Activated CD8-positive, alpha-beta T cell treated with anti-CD3 and anti-CD28 coated beads, Interleukin-2, amount 10 ng/mL, durations not matched to agents 7 days and 5 days (primary cell): ENCODE measurements at regions of chr17 and their contacts with region 1.

Region 1: GRCh38 chr17:7435221-7435675 is at the start of gene TMEM102:
- DNase-seq: peak; percentile 99
- ATAC-seq: peak; percentile 73
- H3K4me3 Mint-ChIP-seq: peak within 1 kb of the TSS; percentile 95
- H3K27ac Mint-ChIP-seq: peak within 1 kb of the TSS; percentile 98
- H3K4me1 Mint-ChIP-seq: peaks cover 38% of the 10 kb centered on the region
- H3K27me3 Mint-ChIP-seq: peaks cover 10% of the 10 kb centered on the region
- total RNA-seq, gene TMEM102: 16.5 to 18.1 TPM

Region 2: GRCh38 chr17:7045909-7046724 is 389.1 kb before region 1 on chr17:
- CTCF ChIA-PET with region 1: interaction called, 11 read pairs
- POLR2A ChIA-PET with region 1: no interaction called
- DNase-seq: peak; percentile 68
- ATAC-seq: peak; percentile 43
- H3K4me3 Mint-ChIP-seq: peak overlapping the region; percentile 73
- H3K27ac Mint-ChIP-seq: peak overlapping the region; percentile 66
- H3K4me1 Mint-ChIP-seq: peaks cover 37% of the 10 kb centered on the region
- H3K27me3 Mint-ChIP-seq: peaks cover 10% of the 10 kb centered on the region

Region 3: DNA sequence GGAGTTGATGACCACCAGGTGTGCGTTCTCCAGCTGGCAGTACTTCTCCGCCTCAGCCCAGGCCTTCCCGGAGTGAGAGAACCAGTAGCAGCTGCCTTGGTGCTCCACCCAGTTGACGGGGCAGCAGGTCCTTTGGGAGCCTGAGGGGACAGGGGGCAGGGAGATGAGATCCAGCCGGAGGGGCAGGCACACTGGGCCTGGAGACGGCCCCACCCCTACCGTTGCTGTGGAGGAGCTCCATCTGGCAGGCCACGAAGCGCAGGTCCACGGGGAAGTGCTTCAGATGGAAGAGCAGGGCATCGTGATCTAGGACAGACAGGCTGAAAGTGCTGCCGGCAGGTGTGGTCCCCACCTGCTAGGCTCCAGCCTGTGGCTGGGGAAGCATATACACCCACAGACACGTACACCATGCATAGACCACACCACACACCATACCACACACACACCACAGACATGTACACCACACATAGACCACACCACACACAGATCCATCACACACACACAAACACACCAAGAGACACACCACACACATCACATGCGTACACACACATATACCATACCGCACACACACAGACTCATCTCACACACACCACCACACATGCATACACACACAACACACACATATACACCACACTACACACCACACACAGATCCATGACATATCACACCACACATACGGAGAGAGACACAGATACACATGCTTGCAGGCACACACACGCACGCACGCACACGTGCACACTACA is 328.1 kb before region 1 on chr17:
- CTCF ChIA-PET with region 1: no interaction called
- POLR2A ChIA-PET with region 1: no interaction called
- DNase-seq: no peak
- ATAC-seq: no peak
- H3K4me3 Mint-ChIP-seq: no peak overlapping the region
- H3K27ac Mint-ChIP-seq: no peak overlapping the region
- H3K4me1 Mint-ChIP-seq: peaks cover 8% of the 10 kb centered on the region
- H3K27me3 Mint-ChIP-seq: no peaks in the 10 kb centered on the region

Region 4: DNA sequence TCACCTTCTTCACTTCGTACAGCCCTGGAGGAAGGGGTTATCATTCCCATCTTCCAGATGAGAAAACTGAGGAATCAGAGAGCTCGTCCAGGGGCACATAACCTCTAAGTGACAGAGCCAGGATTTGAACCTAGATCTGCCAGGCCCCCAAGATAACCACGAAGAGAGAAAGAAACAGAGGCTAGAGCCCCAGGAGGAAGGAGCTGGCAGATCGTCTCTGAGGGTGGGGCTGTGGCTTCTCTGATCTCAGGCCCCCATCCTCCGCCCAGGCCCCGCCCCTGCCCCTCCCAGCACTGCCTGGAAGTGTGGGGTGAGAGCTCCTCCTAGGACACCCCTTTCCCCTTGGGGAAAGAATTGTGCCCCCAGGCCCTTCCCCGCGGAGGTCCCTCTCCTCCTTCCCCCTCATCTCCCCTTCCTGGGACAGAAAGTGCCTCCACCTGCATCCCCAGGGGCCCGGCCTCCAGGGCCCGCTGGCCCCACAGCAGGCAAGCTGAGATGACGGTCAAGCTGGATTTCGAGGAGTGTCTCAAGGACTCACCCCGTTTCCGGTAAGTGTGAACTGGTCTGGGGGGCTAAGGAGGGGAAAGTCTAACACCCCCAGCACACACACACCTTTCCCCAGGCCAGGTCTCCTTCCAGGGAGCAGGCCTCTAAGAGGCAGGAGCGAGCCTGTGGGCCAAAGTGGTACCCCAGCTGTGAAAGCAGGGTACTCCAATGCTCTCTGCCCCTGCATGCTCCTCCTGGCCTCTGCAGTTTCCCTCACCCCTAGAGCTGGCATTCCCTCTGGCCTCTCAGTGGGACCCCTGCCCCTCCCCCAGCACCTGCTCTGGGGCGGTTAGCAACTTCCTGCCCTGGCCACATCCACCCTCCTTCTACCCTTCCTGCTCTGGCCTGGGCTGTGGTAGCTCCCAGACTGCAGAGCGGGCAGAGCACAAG is 98.7 kb before region 1 on chr17 and contains the start of gene ACAP1:
- CTCF ChIA-PET with region 1: interaction called, 14 read pairs
- POLR2A ChIA-PET with region 1: interaction called, 12 read pairs
- DNase-seq: peak; percentile 95
- ATAC-seq: peak; percentile 95
- H3K4me3 Mint-ChIP-seq: peak within 1 kb of the TSS; percentile 85
- H3K27ac Mint-ChIP-seq: peak within 1 kb of the TSS; percentile 98
- H3K4me1 Mint-ChIP-seq: peaks cover 59% of the 10 kb centered on the region
- H3K27me3 Mint-ChIP-seq: no peaks in the 10 kb centered on the region
- total RNA-seq, gene ACAP1: 573 to 605 TPM

Region 5: GRCh38 chr17:7403977-7404736 is 31.1 kb before region 1 on chr17 and contains the start of gene TMEM256:
- CTCF ChIA-PET with region 1: interaction called, 22 read pairs
- POLR2A ChIA-PET with region 1: interaction called, 4 read pairs
- DNase-seq: peak; percentile 99
- ATAC-seq: peak; percentile 94
- H3K4me3 Mint-ChIP-seq: peak within 1 kb of the TSS; percentile 95
- H3K27ac Mint-ChIP-seq: peak within 1 kb of the TSS; percentile 94
- H3K4me1 Mint-ChIP-seq: peaks cover 18% of the 10 kb centered on the region
- H3K27me3 Mint-ChIP-seq: peaks cover 9% of the 10 kb centered on the region
- total RNA-seq, gene TMEM256: 61.8 to 62.3 TPM

Region 6: DNA sequence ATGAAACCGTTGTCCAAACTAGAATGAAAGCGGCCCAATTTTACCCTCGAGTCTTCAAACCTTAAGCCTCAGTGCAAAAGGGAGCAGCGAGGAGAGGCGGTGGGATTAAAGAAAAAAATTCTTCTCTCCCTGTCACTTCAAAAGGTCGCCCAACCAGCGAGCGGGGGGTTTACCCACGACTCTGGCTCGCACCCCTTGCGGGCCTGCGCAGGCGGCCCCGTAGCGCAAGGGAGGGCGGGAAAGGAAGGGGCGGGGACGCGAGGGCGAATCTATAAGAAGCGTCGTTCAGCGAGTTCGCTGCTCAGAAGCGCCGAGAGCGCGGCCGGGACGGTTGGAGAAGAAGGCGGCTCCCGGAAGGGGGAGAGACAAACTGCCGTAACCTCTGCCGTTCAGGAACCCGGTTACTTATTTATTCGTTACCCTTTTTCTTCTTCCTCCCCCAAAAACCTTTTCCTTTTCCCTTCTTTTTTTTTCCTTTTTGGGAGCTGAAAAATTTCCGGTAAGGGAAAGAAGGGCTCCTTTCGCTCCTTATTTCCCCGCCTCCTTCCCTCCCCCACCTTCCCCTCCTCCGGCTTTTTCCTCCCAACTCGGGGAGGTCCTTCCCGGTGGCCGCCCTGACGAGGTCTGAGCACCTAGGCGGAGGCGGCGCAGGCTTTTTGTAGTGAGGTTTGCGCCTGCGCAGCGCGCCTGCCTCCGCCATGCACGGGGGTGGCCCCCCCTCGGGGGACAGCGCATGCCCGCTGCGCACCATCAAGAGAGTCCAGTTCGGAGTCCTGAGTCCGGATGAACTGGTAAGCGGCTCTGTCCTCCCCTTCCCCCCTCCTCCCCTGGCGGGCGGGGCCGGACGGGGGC is 49.0 kb after region 1 on chr17 and contains the start of gene POLR2A:
- CTCF ChIA-PET with region 1: interaction called, 78 read pairs
- POLR2A ChIA-PET with region 1: interaction called, 41 read pairs
- DNase-seq: peak; percentile 97
- ATAC-seq: peak; percentile 64
- H3K4me3 Mint-ChIP-seq: peak within 1 kb of the TSS; percentile 94
- H3K27ac Mint-ChIP-seq: peak within 1 kb of the TSS; percentile 99
- H3K4me1 Mint-ChIP-seq: peaks cover 63% of the 10 kb centered on the region
- H3K27me3 Mint-ChIP-seq: no peaks in the 10 kb centered on the region
- total RNA-seq, gene POLR2A: 183 to 185 TPM

Region 7: DNA sequence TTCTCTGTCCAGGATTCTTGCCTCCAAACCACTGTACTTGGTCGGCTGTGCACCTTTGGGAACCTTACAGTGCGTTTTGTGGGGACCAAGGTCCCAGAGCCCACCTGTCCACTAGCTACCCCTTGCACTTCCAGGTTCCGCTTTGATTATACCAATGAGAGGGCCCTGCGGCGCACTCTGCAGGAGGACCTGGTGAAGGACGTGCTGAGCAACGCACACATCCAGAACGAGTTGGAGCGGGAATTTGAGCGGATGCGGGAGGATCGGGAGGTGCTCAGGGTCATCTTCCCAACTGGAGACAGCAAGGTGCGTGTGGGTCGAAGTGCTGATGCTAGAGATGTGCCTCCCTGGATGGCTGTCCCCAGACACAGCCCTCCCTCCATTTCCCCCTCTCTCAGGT is 67.7 kb after region 1 on chr17:
- CTCF ChIA-PET with region 1: interaction called, 10 read pairs
- POLR2A ChIA-PET with region 1: no interaction called
- DNase-seq: no peak
- ATAC-seq: no peak
- H3K4me3 Mint-ChIP-seq: no peak overlapping the region
- H3K27ac Mint-ChIP-seq: no peak overlapping the region
- H3K4me1 Mint-ChIP-seq: no peaks in the 10 kb centered on the region
- H3K27me3 Mint-ChIP-seq: no peaks in the 10 kb centered on the region

Region 8: GRCh38 chr17:7572588-7573323 is 137.5 kb after region 1 on chr17:
- CTCF ChIA-PET with region 1: interaction called, 10 read pairs
- POLR2A ChIA-PET with region 1: interaction called, 4 read pairs
- DNase-seq: no peak
- ATAC-seq: peak; percentile 13
- H3K4me3 Mint-ChIP-seq: peak overlapping the region; percentile 93
- H3K27ac Mint-ChIP-seq: peak overlapping the region; percentile 100
- H3K4me1 Mint-ChIP-seq: peaks cover 62% of the 10 kb centered on the region
- H3K27me3 Mint-ChIP-seq: no peaks in the 10 kb centered on the region